ENCODE measurements at regions of chr1 and their contacts with region 1.

Region 1: GRCh38 chr1:228082135-228082891 is at the start of gene ARF1:
- DNase-seq: peak; percentile 100
- ATAC-seq: peak; percentile 78
- H3K4me3 ChIP-seq: peak within 1 kb of the TSS; percentile 80
- H3K27ac ChIP-seq: peak within 1 kb of the TSS; percentile 33
- H3K4me1 ChIP-seq: peaks cover 37% of the 10 kb centered on the region
- H3K27me3 ChIP-seq: no peaks in the 10 kb centered on the region
- CTCF ChIP-seq: no peak
- total RNA-seq, gene ARF1: 685 and 688 TPM in 2 replicates

Region 2: GRCh38 chr1:226891846-226892523 is 1190.3 kb before region 1 on chr1:
- CTCF ChIA-PET with region 1: no interaction called
- POLR2A ChIA-PET with region 1: no interaction called
- intact Hi-C with region 1: no loop called
- DNase-seq: no peak
- ATAC-seq: peak; percentile 27
- H3K4me3 ChIP-seq: no peak overlapping the region
- H3K27ac ChIP-seq: no peak overlapping the region
- H3K4me1 ChIP-seq: no peaks in the 10 kb centered on the region
- H3K27me3 ChIP-seq: no peaks in the 10 kb centered on the region
- CTCF ChIP-seq: no peak

Region 3: GRCh38 chr1:228050571-228051231 is 31.6 kb before region 1 on chr1:
- CTCF ChIA-PET with region 1: no interaction called
- POLR2A ChIA-PET with region 1: no interaction called
- intact Hi-C with region 1: no loop called
- DNase-seq: no peak
- ATAC-seq: no peak
- H3K4me3 ChIP-seq: no peak overlapping the region
- H3K27ac ChIP-seq: no peak overlapping the region
- H3K4me1 ChIP-seq: peaks cover 11% of the 10 kb centered on the region
- H3K27me3 ChIP-seq: no peaks in the 10 kb centered on the region
- CTCF ChIP-seq: no peak

Region 4: GRCh38 chr1:228102791-228103620 is 20.7 kb after region 1 on chr1 and contains the start of gene C1orf35:
- CTCF ChIA-PET with region 1: interaction called, 3 read pairs
- POLR2A ChIA-PET with region 1: interaction called, 6 read pairs
- intact Hi-C with region 1: loop called (anchors 2 kb)
- DNase-seq: peak; percentile 100
- ATAC-seq: peak; percentile 71
- H3K4me3 ChIP-seq: peak within 1 kb of the TSS; percentile 79
- H3K27ac ChIP-seq: peak within 1 kb of the TSS; percentile 42
- H3K4me1 ChIP-seq: peaks cover 27% of the 10 kb centered on the region
- H3K27me3 ChIP-seq: no peaks in the 10 kb centered on the region
- CTCF ChIP-seq: no peak
- total RNA-seq, gene C1orf35: 63.3 and 93.0 TPM in 2 replicates

Region 5: DNA sequence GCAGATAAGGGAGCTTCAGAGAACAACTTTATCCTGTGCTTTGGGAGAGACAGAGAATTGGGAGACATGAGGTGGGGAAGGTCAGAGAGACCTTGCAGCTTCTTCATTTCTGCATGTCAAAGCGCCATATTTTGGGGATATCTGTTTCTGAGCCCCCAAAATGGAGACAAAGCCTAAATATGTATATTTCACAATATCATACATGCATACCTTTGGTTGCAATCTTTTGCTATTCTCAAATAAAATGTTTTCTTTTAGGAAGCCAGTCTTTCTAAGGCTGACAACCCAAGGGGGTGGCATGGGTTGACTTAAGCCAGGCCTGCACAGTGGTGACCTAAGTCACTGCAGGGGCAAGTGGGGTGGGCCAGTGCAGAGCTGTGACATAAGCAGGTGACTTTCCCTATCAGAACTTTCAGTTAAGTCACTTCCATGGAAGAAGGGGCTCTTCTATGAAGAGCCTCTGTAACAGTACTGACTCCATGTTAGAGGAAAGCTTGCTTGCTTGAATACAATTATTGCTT is 40.7 kb after region 1 on chr1:
- CTCF ChIA-PET with region 1: no interaction called
- POLR2A ChIA-PET with region 1: no interaction called
- intact Hi-C with region 1: no loop called
- DNase-seq: no peak
- ATAC-seq: no peak
- H3K4me3 ChIP-seq: no peak overlapping the region
- H3K27ac ChIP-seq: no peak overlapping the region
- H3K4me1 ChIP-seq: no peaks in the 10 kb centered on the region
- H3K27me3 ChIP-seq: no peaks in the 10 kb centered on the region
- CTCF ChIP-seq: no peak

Region 6: GRCh38 chr1:228139944-228140656 is 57.8 kb after region 1 on chr1 and contains the start of gene GUK1:
- CTCF ChIA-PET with region 1: no interaction called
- POLR2A ChIA-PET with region 1: interaction called, 4 read pairs
- intact Hi-C with region 1: loop called (anchors 1 kb)
- DNase-seq: peak; percentile 100
- ATAC-seq: peak; percentile 91
- H3K4me3 ChIP-seq: peak within 1 kb of the TSS; percentile 84
- H3K27ac ChIP-seq: peak within 1 kb of the TSS; percentile 44
- H3K4me1 ChIP-seq: peaks cover 23% of the 10 kb centered on the region
- H3K27me3 ChIP-seq: no peaks in the 10 kb centered on the region
- CTCF ChIP-seq: peak; percentile 42
- total RNA-seq, gene GUK1: 996 and 1,117 TPM in 2 replicates

Region 7: DNA sequence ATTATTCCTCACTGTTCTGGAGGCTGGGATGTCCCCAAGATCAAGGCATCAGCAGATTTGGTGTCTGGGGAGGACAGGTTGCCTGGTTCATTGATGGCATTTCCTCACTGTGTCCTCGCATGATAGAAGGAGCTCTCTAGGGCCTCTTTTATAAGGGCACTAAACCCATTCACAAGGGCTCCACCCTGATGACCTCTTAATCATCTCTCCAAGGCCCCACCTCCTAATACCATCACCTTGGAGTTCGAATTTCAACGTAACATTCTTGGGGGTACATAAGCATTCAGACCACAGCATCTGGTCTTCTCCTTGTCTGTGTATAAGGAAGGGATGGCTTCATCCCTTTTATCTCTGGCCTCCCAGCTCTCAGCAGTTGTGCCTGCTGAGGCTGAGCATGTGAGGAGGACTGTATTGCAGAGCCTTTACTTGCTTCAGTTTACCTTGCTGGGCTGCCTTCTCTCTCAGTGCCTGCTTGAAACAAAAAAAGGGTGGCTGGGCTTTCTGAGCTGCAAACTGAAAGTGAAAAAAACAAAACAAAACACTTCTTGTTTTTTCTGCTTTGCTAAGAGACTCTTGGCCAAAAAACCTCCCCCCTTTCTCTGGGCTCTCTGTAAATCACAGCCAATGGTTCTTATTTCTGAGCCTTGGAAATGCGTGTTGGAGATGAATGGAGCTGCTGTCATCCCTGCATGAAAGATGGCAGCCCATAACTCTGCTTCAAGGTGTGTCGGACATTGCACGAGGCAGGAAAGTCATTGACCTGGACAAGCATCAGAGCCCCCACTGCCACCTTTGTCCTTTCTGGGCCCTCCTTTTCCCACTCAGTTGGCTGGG is 728.8 kb after region 1 on chr1:
- CTCF ChIA-PET with region 1: no interaction called
- POLR2A ChIA-PET with region 1: no interaction called
- intact Hi-C with region 1: no loop called
- DNase-seq: no peak
- ATAC-seq: no peak
- H3K4me3 ChIP-seq: no peak overlapping the region
- H3K27ac ChIP-seq: no peak overlapping the region
- H3K4me1 ChIP-seq: no peaks in the 10 kb centered on the region
- H3K27me3 ChIP-seq: peaks cover 42% of the 10 kb centered on the region
- CTCF ChIP-seq: no peak